ENCODE measurements at regions of chr2 and their contacts with region 1.

Region 1: GRCh38 chr2:176227874-176228273 is 39.4 kb downstream of the HOXD1 start:
- DNase-seq: no peak
- ATAC-seq: no peak
- H3K4me3 ChIP-seq: no peak overlapping the region
- H3K27ac ChIP-seq: no peak overlapping the region
- H3K4me1 ChIP-seq: no peaks in the 10 kb centered on the region
- H3K27me3 ChIP-seq: peaks cover 0 to 5% (median 0%) of the 10 kb centered on the region in 3 donors
- CTCF ChIP-seq: no peak
- POLR2A ChIP-seq: no peak

Region 2: DNA sequence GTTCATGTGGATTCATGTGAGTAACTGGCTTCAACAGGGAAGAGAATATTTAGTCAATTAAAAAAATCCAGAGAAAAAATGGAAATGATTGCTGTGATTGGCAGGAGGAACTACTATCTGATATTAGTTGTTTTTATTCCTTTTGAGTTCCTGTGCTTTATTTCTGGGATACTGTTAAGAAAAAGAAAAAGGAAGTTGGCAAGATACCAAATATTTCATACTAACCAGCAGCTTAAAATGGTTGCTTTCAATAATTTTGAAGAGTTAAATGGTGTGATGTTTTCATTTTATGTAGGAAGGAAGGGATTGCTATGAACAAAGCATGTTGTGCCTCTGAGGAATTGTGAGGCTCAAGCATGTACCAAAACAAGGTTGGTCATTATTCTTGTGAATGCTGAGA is 33.3 kb after region 1 on chr2:
- in situ Hi-C with region 1: no loop called
- intact Hi-C with region 1: no loop called
- DNase-seq: no peak
- ATAC-seq: no peak
- H3K4me3 ChIP-seq: no peak overlapping the region
- H3K27ac ChIP-seq: no peak overlapping the region
- H3K4me1 ChIP-seq: no peaks in the 10 kb centered on the region
- H3K27me3 ChIP-seq: no peaks in the 10 kb centered on the region
- CTCF ChIP-seq: no peak
- POLR2A ChIP-seq: no peak

Region 3: DNA sequence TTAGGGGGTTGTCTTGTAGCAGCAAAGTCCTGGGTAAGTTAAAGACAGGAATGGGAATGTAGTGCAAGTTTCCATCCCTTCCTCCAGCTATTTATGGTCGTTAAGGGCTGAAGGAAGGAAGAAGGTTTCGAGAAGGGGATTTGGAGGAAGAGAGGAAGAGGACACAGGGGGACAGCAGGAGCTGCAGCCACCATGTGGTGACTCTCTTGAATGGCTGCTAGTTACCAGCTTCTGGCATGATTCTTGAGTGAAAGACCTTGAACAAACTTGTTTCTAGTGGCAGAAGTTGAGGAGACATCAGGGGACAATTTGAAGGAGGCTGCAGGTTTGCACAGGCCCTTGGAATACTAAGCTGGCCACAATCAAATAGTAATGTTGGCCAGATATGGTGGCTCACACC is 158.0 kb after region 1 on chr2:
- in situ Hi-C with region 1: loop called in 1 of 4 experiments (anchors 10 kb)
- intact Hi-C with region 1: no loop called
- DNase-seq: no peak
- ATAC-seq: no peak
- H3K4me3 ChIP-seq: no peak overlapping the region
- H3K27ac ChIP-seq: no peak overlapping the region
- H3K4me1 ChIP-seq: no peaks in the 10 kb centered on the region
- H3K27me3 ChIP-seq: no peaks in the 10 kb centered on the region
- CTCF ChIP-seq: no peak
- POLR2A ChIP-seq: no peak

Measured in gastrocnemius medialis (tissue), 4 donors.